ENCODE measurements at regions of chr3 and their contacts with region 1.

Region 1: GRCh38 chr3:70064194-70064779 is 64.8 kb downstream of the SAMMSON start:
- DNase-seq: no peak

Region 2: GRCh38 chr3:70358978-70359580 is 294.8 kb after region 1 on chr3:
- intact Hi-C with region 1: loop called in 1 of 2 experiments (anchors 10 kb)
- DNase-seq: no peak

Measured in posterior vena cava (tissue), 2 donors.